MCF 10A (cell line): ENCODE measurements at regions of chr12 and their contacts with region 1.

Region 1: GRCh38 chr12:121443193-121443870 is 43.4 kb downstream of the RNF34 start:
- DNase-seq: peak; percentile 80
- H3K4me3 Mint-ChIP-seq: no peak overlapping the region
- H3K27ac Mint-ChIP-seq: no peak overlapping the region
- H3K4me1 Mint-ChIP-seq: no peaks in the 10 kb centered on the region
- H3K27me3 Mint-ChIP-seq: no peaks in the 10 kb centered on the region
- CTCF ChIP-seq: peak; percentile 84

Region 2: GRCh38 chr12:121060149-121061001 is 383.0 kb before region 1 on chr12:
- CTCF ChIA-PET with region 1: interaction called, 3 read pairs
- POLR2A ChIA-PET with region 1: interaction called, 3 read pairs
- intact Hi-C with region 1: loop called (anchors 5 kb)
- DNase-seq: peak; percentile 52
- H3K4me3 Mint-ChIP-seq: no peak overlapping the region
- H3K27ac Mint-ChIP-seq: no peak overlapping the region
- H3K4me1 Mint-ChIP-seq: no peaks in the 10 kb centered on the region
- H3K27me3 Mint-ChIP-seq: no peaks in the 10 kb centered on the region
- CTCF ChIP-seq: peak; percentile 52

Region 3: GRCh38 chr12:121334513-121335343 is 108.6 kb before region 1 on chr12:
- CTCF ChIA-PET with region 1: interaction called, 80 read pairs
- POLR2A ChIA-PET with region 1: no interaction called
- intact Hi-C with region 1: loop called (anchors 1 kb)
- DNase-seq: peak; percentile 66
- H3K4me3 Mint-ChIP-seq: no peak overlapping the region
- H3K27ac Mint-ChIP-seq: no peak overlapping the region
- H3K4me1 Mint-ChIP-seq: no peaks in the 10 kb centered on the region
- H3K27me3 Mint-ChIP-seq: no peaks in the 10 kb centered on the region
- CTCF ChIP-seq: peak; percentile 67

Region 4: GRCh38 chr12:121432740-121433480 is 10.4 kb before region 1 on chr12:
- CTCF ChIA-PET with region 1: interaction called, 37 read pairs
- POLR2A ChIA-PET with region 1: interaction called, 3 read pairs
- intact Hi-C with region 1: no loop called
- DNase-seq: no peak
- H3K4me3 Mint-ChIP-seq: no peak overlapping the region
- H3K27ac Mint-ChIP-seq: no peak overlapping the region
- H3K4me1 Mint-ChIP-seq: no peaks in the 10 kb centered on the region
- H3K27me3 Mint-ChIP-seq: no peaks in the 10 kb centered on the region
- CTCF ChIP-seq: no peak

Region 5: DNA sequence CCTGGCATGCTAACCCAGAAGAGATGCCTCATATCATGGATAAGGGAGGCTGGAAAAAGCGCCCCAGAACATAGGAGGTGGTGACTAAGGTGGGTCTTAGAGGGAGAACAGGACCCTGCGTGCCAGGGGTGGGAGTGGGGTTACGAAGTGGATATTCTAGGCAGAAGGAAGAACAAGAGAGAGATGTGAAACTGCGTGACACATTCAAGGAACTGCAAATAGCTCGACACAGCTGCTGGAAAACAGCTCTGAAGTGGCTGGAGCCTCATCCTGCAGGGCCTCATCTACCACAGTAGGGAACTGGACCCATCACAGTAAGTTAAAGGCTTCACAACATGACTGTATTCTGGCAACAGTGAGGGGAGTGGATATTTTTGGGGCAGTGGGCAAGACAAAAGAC is 17.7 kb after region 1 on chr12:
- CTCF ChIA-PET with region 1: interaction called, 19 read pairs
- POLR2A ChIA-PET with region 1: interaction called, 3 read pairs
- intact Hi-C with region 1: no loop called
- DNase-seq: no peak
- H3K4me3 Mint-ChIP-seq: no peak overlapping the region
- H3K27ac Mint-ChIP-seq: no peak overlapping the region
- H3K4me1 Mint-ChIP-seq: peaks cover 7% of the 10 kb centered on the region
- H3K27me3 Mint-ChIP-seq: no peaks in the 10 kb centered on the region
- CTCF ChIP-seq: no peak